SK-N-SH (cell line): ENCODE measurements at regions of chr5 and their contacts with region 1.

Region 1: DNA sequence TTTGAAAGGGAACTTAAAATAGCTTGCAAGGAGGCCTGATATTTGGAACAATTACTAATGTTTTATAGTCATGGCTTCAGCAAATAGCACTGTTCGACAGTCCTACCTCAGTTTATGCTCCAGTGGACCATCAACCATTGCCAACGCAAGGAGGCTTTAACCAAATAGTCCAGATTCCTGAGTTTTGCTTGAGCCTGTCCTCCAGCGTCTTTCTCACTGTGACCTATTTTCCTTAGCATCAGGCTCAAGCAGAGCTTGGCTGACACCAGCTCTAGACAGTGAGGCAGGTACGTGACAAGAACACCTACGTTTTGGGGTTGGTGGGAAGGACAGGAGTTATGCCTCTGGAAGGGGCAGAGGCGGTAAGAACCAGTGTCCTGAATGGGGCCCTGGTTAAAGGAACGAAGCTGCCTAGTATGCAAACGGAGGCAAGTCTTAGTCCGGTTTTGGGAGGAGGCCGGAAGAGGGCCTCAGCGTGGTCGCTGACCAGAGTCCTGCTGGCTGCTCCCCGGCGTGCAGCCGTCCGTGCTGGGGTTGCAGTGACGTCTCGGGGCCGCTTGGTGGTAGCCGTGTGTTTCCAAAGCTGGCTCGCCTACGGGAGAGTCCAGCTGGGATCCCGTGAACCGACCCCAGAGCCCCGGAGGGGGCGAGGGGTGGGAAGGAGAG is 998 bp upstream of the FGF18 start:
- DNase-seq: peak; percentile 94
- H3K4me3 ChIP-seq: peak overlapping the region; percentile 47 to 58
- H3K27ac ChIP-seq: no peak overlapping the region
- H3K4me1 ChIP-seq: peaks cover 0 to 32% of the 10 kb centered on the region in 2 experiments; a peak in 1 of 4 replicates
- H3K27me3 ChIP-seq: no peaks in the 10 kb centered on the region
- CTCF ChIP-seq: peak; percentile 86
- EP300 ChIP-seq: no peak
- RAD21 ChIP-seq: peak; percentile 94

Region 2: GRCh38 chr5:171272996-171273970 is 145.2 kb before region 1 on chr5:
- CTCF ChIA-PET with region 1: no interaction called
- POLR2A ChIA-PET with region 1: no interaction called
- DNase-seq: peak; percentile 58
- H3K4me3 ChIP-seq: no peak overlapping the region
- H3K27ac ChIP-seq: peak overlapping the region in 1 of 2 experiments; percentile 53; a peak in 2 of 4 replicates
- H3K4me1 ChIP-seq: peaks cover 4 to 16% of the 10 kb centered on the region in 2 experiments; a peak in 3 of 4 replicates
- H3K27me3 ChIP-seq: no peaks in the 10 kb centered on the region
- CTCF ChIP-seq: peak; percentile 67
- EP300 ChIP-seq: 0 out of 4 replicates have a peak, but pooled peaks of 1 of the 2 experiments have one; percentile 3
- RAD21 ChIP-seq: peak; percentile 87

Region 3: GRCh38 chr5:171437286-171437821 is 18.9 kb after region 1 on chr5:
- CTCF ChIA-PET with region 1: interaction called, 19 read pairs
- POLR2A ChIA-PET with region 1: no interaction called
- DNase-seq: peak; percentile 56
- H3K4me3 ChIP-seq: no peak overlapping the region
- H3K27ac ChIP-seq: no peak overlapping the region
- H3K4me1 ChIP-seq: peaks cover 0 to 13% of the 10 kb centered on the region in 2 experiments; a peak in 1 of 4 replicates
- H3K27me3 ChIP-seq: no peaks in the 10 kb centered on the region
- CTCF ChIP-seq: no peak
- EP300 ChIP-seq: no peak
- RAD21 ChIP-seq: no peak

Region 4: DNA sequence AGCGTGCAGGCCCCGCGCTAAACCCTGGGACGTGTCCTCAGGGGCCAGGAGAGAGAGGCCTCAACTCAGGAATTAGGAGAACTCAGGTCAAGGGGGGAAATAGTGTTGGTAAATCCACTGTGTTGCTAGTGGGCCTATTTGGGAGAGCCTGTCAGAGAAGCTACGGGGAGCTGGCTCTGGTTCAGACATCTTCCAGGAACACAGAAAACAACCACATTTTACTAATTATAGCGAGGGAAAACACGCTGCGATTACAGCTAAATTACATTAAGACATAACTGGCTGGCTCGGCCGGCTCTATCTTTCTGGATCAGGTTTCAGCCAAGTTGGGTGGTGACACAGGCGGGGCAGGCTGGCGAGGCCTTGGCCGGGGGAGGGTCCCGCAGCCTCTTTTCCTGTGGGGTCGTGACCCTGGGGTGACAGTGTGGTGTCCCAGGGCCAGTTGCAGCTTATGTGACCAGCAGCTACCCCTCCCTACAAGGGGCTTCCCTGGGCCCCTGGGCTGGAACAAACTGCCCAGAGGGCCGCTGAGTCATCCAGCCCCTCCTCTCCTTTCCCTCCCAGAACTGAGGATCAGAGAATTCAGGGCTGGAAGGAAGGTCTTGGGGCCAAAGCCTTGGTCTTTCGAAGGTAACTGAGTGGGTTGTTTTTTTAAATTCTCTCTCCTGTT is 76.1 kb after region 1 on chr5:
- CTCF ChIA-PET with region 1: interaction called, 13 read pairs
- POLR2A ChIA-PET with region 1: no interaction called
- DNase-seq: peak; percentile 86
- H3K4me3 ChIP-seq: 0 out of 4 replicates have a peak overlapping the region, but pooled peaks of 1 of the 2 experiments have one; percentile 4
- H3K27ac ChIP-seq: peak overlapping the region; percentile 84 to 87
- H3K4me1 ChIP-seq: peaks cover 19 to 43% of the 10 kb centered on the region in 2 experiments; a peak in 3 of 4 replicates
- H3K27me3 ChIP-seq: no peaks in the 10 kb centered on the region
- CTCF ChIP-seq: no peak
- EP300 ChIP-seq: peak; percentile 61 to 95; a peak in 3 of 4 replicates
- RAD21 ChIP-seq: peak; percentile 23; the same call in 1 of the 2 replicates

Region 5: GRCh38 chr5:171850324-171851285 is 432.2 kb after region 1 on chr5:
- CTCF ChIA-PET with region 1: interaction called, 14 read pairs
- POLR2A ChIA-PET with region 1: no interaction called
- DNase-seq: peak; percentile 53
- H3K4me3 ChIP-seq: no peak overlapping the region; a peak in 1 of 4 replicates
- H3K27ac ChIP-seq: no peak overlapping the region
- H3K4me1 ChIP-seq: peaks cover 0 to 8% of the 10 kb centered on the region in 2 experiments; a peak in 1 of 4 replicates
- H3K27me3 ChIP-seq: no peaks in the 10 kb centered on the region
- CTCF ChIP-seq: peak; percentile 33; the same call in 1 of the 2 replicates
- EP300 ChIP-seq: no peak
- RAD21 ChIP-seq: peak; percentile 61

Region 6: GRCh38 chr5:171898386-171898785 is 479.9 kb after region 1 on chr5:
- CTCF ChIA-PET with region 1: interaction called, 11 read pairs
- POLR2A ChIA-PET with region 1: no interaction called
- DNase-seq: no peak
- H3K4me3 ChIP-seq: no peak overlapping the region
- H3K27ac ChIP-seq: no peak overlapping the region
- H3K4me1 ChIP-seq: peaks cover 2 to 11% of the 10 kb centered on the region in 2 experiments; a peak in 3 of 4 replicates
- H3K27me3 ChIP-seq: no peaks in the 10 kb centered on the region
- CTCF ChIP-seq: no peak
- EP300 ChIP-seq: no peak
- RAD21 ChIP-seq: no peak

Region 7: GRCh38 chr5:172059661-172060100 is 641.2 kb after region 1 on chr5:
- CTCF ChIA-PET with region 1: interaction called, 10 read pairs
- POLR2A ChIA-PET with region 1: no interaction called
- DNase-seq: peak; percentile 56
- H3K4me3 ChIP-seq: no peak overlapping the region
- H3K27ac ChIP-seq: no peak overlapping the region
- H3K4me1 ChIP-seq: no peaks in the 10 kb centered on the region
- H3K27me3 ChIP-seq: no peaks in the 10 kb centered on the region
- CTCF ChIP-seq: peak; percentile 69
- EP300 ChIP-seq: no peak
- RAD21 ChIP-seq: peak; percentile 62